Transverse colon (tissue), 4 donors: ENCODE measurements at regions of chr21 and their contacts with region 1.

Region 1: GRCh38 chr21:37273911-37274690 is 7.0 kb upstream of the VPS26C start:
- DNase-seq: no peak
- H3K4me3 ChIP-seq: no peak overlapping the region
- H3K27ac ChIP-seq: no peak overlapping the region
- H3K4me1 ChIP-seq: no peaks in the 10 kb centered on the region
- H3K27me3 ChIP-seq: no peaks in the 10 kb centered on the region
- CTCF ChIP-seq: no peak
- EP300 ChIP-seq: no peak
- POLR2A ChIP-seq: no peak

Region 2: GRCh38 chr21:37220981-37221664 is 53.0 kb before region 1 on chr21:
- in situ Hi-C with region 1: no loop called
- intact Hi-C with region 1: no loop called
- DNase-seq: peak; percentile 95
- H3K4me3 ChIP-seq: peak overlapping the region; percentile 44 to 66 (median 54)
- H3K27ac ChIP-seq: peak overlapping the region; percentile 74 to 87 (median 81)
- H3K4me1 ChIP-seq: peaks cover 0 to 18% (median 8%) of the 10 kb centered on the region in 4 donors
- H3K27me3 ChIP-seq: no peaks in the 10 kb centered on the region
- CTCF ChIP-seq: peak in 2 of 5 experiments; percentile 22 to 42
- EP300 ChIP-seq: no peak
- POLR2A ChIP-seq: peak; percentile 54

Region 3: DNA sequence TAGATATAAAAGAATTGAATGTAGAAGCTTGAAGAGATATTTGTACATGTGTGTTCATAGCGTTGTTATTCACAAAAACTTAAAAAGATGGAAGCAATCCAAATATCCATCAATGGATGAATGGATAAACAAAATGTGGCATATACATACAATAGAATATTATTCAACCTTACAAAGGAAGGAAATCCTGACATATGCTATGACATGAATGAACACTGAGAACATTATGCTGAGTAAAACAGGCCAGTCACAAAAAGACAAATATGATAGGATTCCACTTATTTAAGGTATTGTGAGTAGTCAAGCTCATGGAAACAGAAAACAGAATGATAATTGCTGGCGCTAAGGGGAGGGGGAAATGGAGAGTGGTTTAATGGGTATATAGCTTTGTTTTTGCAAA is 45.5 kb after region 1 on chr21:
- in situ Hi-C with region 1: no loop called
- intact Hi-C with region 1: loop called (anchors 1 kb)
- DNase-seq: no peak
- H3K4me3 ChIP-seq: no peak overlapping the region
- H3K27ac ChIP-seq: no peak overlapping the region
- H3K4me1 ChIP-seq: no peaks in the 10 kb centered on the region
- H3K27me3 ChIP-seq: no peaks in the 10 kb centered on the region
- CTCF ChIP-seq: no peak
- EP300 ChIP-seq: no peak
- POLR2A ChIP-seq: no peak

Region 4: DNA sequence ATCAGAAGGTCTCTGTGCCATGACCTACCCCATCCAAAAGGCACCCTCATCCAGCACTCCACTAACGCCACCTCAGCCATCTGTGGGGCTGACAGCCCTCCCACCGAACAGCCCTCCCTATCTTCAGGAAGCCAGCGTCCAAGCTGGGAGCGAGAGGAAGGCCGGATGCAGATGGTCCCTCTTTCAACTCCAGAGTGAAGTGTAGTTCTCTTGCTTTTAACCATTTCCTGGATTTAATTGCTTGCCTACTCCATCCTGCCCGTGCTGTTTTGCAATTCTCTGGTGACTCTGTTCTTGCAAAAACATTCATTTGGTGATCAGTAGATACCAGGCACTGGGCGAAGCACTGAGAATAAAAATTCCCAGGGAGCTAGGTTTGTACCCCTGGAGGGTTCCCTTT is 84.3 kb after region 1 on chr21:
- in situ Hi-C with region 1: loop called in 2 of 4 experiments (anchors 10 kb)
- intact Hi-C with region 1: no loop called
- DNase-seq: no peak
- H3K4me3 ChIP-seq: no peak overlapping the region
- H3K27ac ChIP-seq: no peak overlapping the region
- H3K4me1 ChIP-seq: no peaks in the 10 kb centered on the region
- H3K27me3 ChIP-seq: no peaks in the 10 kb centered on the region
- CTCF ChIP-seq: no peak
- EP300 ChIP-seq: no peak
- POLR2A ChIP-seq: no peak